ENCODE measurements at regions of chr5 and their contacts with region 1.

Region 1: GRCh38 chr5:17189381-17190036 is 27.9 kb upstream of the BASP1 start:
- DNase-seq: peak in 3 of 4 donors; percentile 70 to 86 (median 75)
- ATAC-seq: peak; percentile 80
- H3K4me3 ChIP-seq: no peak overlapping the region
- H3K27ac ChIP-seq: peak overlapping the region in 1 of 2 donors; percentile 47
- H3K4me1 ChIP-seq: peaks cover 12 to 17% of the 10 kb centered on the region in 2 donors
- H3K27me3 ChIP-seq: no peaks in the 10 kb centered on the region
- CTCF ChIP-seq: peak; percentile 76 to 80

Region 2: DNA sequence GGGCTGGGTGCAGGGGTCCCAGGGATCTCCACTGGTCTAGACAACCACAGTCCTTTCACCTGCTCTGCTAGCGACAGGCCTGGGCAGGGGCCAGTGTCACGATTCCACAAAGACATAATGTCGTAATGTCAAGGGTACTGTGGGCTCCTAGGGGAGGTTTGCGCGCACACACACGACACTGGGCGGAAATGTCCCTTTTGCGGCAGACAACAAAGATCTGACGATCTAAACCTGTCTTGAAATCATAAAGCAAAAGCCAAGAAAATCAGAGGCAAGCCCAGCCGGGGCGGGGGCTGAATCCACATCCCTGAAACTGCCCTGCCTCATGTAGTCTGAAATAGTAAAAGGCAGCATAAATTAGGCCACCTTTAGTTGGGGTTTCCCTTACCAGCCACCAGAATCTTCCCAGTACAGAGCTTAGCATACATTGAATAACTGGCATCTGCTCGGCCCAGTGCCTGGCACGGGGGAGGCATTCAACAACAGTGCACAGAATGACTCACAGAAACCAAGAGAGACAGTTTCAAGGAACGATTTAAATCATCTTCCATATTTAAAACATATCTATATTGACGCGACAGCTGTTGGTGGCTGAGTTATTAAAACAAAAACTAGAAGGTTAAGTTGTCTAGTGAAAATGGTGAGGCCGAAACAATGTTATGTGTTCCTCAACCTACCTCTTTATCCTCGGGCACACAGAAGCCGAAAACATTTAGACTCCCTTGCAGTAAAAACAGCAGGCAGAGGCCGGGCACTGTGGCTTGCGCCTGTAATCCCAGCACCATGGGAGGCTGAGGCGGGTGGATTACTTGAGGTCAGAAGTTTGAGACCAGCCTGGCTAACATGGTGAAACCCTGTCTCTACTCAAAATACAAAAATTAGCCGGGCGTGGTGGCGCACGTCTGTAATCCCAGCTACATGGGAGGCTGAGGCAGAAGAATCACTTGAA is 404.4 kb before region 1 on chr5:
- intact Hi-C with region 1: loop called (anchors 5 to 10 kb)
- DNase-seq: no peak
- ATAC-seq: no peak
- H3K4me3 ChIP-seq: no peak overlapping the region
- H3K27ac ChIP-seq: no peak overlapping the region
- H3K4me1 ChIP-seq: no peaks in the 10 kb centered on the region
- H3K27me3 ChIP-seq: no peaks in the 10 kb centered on the region
- CTCF ChIP-seq: no peak

Region 3: GRCh38 chr5:16934123-16934522 is 255.4 kb before region 1 on chr5:
- intact Hi-C with region 1: loop called in 1 of 2 experiments (anchors 2 kb)
- DNase-seq: peak in 2 of 4 donors; percentile 59 to 83
- ATAC-seq: peak; percentile 53
- H3K4me3 ChIP-seq: peak overlapping the region; percentile 57 to 68
- H3K27ac ChIP-seq: no peak overlapping the region
- H3K4me1 ChIP-seq: peaks cover 27 to 57% of the 10 kb centered on the region in 2 donors
- H3K27me3 ChIP-seq: peaks cover 0 to 44% of the 10 kb centered on the region in 2 donors
- CTCF ChIP-seq: peak; percentile 86 to 91

Region 4: DNA sequence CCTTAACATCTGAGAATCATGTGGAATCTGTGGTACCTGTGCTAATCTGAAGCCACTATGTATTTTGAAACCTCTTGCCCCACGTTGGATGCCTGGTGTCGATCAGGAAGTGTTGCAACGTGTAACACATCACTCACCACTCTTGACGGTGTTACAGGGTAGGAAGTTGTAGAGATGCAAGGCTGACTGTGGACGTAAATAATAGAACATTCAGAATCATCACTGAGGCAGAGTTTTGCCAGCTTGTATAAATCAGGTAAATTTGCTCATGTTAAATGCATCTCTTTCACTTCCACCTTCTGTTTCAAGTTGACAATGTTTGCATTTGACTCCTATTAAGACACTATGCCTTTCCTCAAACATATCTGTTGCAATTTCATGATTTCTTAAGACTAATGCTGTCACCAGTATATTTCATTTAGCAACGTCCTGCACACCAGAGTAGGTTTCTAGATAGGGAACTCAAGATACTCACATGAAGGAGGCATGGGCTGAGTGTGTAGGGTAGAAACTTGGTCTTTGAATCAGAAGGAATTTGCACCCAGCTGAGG is 66.0 kb after region 1 on chr5:
- intact Hi-C with region 1: no loop called
- DNase-seq: no peak
- ATAC-seq: peak; percentile 71
- H3K4me3 ChIP-seq: no peak overlapping the region
- H3K27ac ChIP-seq: peak overlapping the region in 1 of 2 donors; percentile 77
- H3K4me1 ChIP-seq: peaks cover 0 to 47% of the 10 kb centered on the region in 2 donors
- H3K27me3 ChIP-seq: no peaks in the 10 kb centered on the region
- CTCF ChIP-seq: no peak

Region 5: DNA sequence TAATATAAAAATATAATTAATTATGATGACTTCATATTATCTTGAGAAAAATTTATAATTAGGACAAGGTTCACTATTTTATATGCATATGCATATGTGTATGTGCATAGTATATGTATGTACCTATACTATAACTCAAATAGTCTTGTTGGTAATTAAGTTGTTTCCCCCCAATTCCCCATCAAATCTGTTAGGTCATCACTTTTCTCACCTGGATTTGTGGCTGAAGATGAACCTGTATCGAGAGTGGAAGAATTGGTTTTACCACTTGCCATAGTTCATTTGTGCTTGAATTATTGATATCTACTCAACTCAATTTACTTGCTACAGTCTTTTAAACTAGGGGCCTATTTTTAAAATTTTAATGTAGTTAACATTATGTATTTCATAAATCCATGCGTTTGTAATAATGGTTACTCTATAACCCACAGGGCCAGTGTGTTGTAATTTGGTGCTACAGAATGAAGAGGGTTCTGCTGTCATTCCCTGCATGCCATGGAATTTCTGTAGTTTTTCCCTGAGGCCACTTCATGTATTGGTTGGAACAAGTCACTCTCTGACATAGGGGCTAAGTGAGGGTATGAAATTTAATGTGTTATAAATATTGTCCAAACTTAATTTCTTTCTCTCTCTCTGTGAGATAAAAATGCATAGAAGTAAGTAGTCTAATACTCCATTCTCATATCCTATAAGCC is 519.6 kb after region 1 on chr5:
- intact Hi-C with region 1: no loop called
- DNase-seq: no peak
- ATAC-seq: no peak
- H3K4me3 ChIP-seq: no peak overlapping the region
- H3K27ac ChIP-seq: no peak overlapping the region
- H3K4me1 ChIP-seq: no peaks in the 10 kb centered on the region
- H3K27me3 ChIP-seq: no peaks in the 10 kb centered on the region
- CTCF ChIP-seq: no peak

Measured in left lung (tissue), 14 donors.